AG04449 (cell line): ENCODE measurements at regions of chr16 and their contacts with region 1.

Region 1: DNA sequence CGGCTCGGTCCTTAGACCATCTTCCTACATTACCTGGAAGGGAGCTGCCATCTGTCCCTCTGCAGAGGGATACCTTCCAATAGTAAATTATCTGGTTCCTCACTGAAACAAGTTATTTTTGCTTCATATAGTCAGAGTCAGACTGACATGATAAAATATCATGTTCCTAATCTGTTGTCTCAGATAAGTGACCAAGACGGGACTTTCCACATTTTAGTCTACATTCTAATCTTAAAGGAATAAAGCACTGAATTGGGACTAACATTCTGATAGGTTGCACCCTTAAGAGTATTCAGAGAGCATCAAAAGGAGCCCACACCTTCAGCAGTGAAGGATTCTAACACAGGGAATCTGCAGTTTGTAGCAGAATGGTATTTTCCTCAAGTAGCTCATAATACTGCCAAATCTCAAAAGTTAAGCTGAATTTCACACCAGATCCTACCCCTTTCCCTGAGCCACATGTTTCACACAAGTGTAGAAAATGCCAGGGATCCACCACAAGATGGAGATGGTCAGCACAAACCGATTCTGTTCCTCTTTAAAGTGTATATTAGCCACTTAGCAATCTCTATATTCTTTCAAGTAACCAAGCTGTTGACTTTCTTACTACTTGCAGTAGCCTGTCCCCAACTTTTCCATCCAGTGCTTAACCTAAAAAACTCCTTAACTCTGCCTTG is 13.4 kb downstream of the GINS2 start:
- DNase-seq: no peak
- H3K4me3 ChIP-seq: no peak overlapping the region
- CTCF ChIP-seq: peak; percentile 58

Region 2: DNA sequence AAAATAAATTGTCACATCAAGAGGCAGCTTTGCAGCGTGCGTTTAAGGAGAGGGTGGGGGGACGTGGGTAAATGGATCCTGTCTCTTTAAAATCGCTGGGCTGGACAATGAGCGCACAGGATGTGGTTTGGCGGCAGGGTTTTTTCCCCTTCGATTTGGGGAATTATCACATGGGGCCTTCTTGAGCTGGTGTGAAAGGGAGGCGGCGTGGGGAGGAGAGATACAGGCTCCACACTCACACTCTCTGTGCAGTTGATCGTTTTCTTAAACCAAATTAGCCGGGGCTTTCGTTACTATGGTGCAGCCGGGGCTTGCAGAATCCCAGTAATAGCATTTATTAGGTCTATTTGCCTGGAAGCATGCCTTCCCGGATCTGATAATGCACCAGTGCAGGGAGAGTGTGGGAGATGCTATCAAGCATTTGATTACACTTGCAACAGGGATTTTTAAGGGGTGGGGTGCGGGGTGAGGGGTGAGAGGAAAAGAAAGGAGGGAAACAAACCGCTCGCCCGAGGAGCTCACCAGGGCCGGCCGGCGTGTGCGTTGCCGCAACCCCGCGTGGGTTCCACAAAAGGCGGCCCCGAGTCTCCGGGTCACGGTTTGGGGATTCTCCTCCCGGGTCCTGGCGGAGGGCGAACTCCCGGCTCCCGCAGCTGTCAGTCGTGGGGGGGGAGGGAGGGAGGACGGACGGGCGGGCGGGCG is 121.1 kb before region 1 on chr16:
- CTCF ChIA-PET with region 1: no interaction called
- POLR2A ChIA-PET with region 1: no interaction called
- DNase-seq: no peak
- H3K4me3 ChIP-seq: peak overlapping the region; percentile 76
- CTCF ChIP-seq: no peak

Region 3: GRCh38 chr16:85659805-85660495 is 15.4 kb before region 1 on chr16:
- CTCF ChIA-PET with region 1: interaction called, 145 read pairs
- POLR2A ChIA-PET with region 1: no interaction called
- DNase-seq: no peak
- H3K4me3 ChIP-seq: no peak overlapping the region
- CTCF ChIP-seq: peak; percentile 92

Region 4: DNA sequence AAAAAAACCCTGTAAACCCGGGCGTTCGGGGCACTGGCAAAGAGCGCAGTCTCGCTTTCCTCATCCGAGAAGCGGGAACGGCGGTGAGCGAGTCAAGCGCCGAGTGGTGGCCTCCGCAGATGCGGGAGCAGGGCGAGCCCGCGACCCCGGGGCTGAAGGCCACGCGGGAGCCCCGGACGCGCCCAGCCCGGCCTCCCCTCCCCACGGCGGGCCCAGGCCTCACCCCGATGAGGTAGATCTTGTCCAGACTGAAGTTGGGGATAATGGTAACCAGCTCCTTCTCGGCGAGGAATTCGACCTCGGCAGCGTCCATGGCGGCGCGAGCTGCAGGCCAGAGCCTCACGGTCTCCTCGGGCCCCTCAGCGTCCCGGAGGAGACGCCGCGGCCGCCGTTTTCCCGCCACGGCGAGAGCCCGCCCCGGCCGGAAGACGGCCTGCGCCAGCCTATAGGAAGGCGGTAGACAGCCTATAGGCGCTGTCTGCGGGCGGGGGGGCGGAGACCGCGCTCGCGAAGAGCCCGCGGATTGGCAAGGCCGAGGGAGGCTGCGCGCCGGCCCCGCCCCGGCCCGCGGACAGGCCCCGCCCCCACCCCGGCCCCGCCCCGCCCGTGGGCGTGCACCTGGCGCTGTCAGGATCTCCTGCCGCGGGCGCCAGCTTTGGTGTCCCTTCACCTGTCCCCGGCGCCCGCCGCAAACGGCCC is 13.3 kb after region 1 on chr16 and contains the start of gene GINS2:
- CTCF ChIA-PET with region 1: interaction called, 30 read pairs
- POLR2A ChIA-PET with region 1: interaction called, 4 read pairs
- DNase-seq: peak; percentile 34
- H3K4me3 ChIP-seq: peak within 1 kb of the TSS; percentile 79
- CTCF ChIP-seq: no peak